Left ventricle myocardium inferior (tissue), 1 donor: ENCODE measurements at regions of chr3 and their contacts with region 1.

Region 1: DNA sequence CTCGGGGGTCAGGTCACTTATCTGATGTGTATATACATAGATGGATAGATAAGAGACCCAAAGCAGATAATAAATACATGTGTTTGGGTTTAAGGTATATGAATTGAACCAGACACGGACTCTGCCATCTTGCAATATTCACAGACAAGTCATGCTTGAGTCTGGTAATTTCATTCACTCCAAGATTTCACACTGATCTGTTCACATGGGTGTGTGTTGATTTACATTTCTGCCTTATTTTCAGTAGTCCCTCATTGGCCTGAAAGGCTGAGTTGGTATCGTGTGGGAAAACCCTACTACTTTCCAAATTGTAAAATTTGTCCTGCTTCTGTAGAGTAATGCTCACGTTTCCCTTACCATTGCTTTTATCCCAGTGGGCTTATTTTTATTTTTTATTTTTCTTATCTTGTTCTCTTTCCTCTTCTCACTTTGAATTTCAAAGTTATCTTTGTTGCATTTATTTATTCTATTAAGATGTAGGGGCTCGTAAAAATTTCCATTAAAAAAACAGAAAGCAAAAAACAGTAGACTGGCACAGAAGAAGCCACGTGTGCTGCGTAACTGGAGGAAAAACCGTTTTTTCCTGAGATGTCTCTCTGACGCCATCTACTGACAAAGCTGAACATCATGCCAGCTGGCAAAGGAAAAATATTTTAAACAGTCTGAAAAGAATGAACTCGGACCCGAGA is 10.8 kb upstream of the MFSD1 start:
- DNase-seq: no peak
- H3K4me3 ChIP-seq: peak overlapping the region; percentile 39
- H3K27ac ChIP-seq: no peak overlapping the region
- H3K4me1 ChIP-seq: peaks cover 10% of the 10 kb centered on the region
- H3K27me3 ChIP-seq: no peaks in the 10 kb centered on the region
- CTCF ChIP-seq: peak; percentile 89

Region 2: DNA sequence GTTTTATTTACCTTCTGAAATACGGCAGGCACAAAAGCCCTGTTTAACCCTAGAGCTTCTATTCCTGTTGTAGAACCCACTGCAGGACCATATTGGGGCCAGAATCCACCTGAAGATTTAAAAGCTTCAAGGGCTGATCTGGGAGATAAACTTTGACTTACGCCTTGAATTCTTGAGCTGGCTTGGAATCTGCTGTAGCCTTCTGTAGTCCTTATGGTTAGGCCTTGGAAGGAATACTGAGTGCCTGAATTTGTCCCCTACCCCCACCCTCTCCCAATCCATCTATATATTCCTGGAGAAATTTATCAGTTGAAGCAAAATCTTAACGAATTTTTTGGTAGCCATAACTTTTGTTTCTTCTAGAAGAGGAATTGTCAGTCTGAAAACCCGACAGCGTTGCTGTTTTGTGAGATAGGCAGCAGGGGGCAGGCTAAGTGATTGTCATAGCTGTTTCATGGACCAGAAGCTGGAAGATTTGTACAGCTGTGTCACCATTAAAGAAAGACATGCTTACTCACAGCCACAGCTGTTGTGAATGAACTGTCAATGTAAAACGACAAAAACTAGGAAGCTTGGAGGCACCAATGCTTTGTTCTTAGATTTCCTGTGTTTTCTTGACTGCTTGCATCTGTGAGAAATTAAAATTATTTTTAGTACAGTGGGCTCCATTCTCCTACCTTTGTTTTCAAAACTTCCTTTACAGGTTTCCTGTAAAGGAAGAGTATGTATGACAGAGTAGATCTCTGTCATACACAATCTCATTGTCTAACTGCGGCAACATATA is 131.4 kb before region 1 on chr3:
- intact Hi-C with region 1: loop called (anchors 5 kb)
- DNase-seq: peak; percentile 20
- H3K4me3 ChIP-seq: no peak overlapping the region
- H3K27ac ChIP-seq: peak overlapping the region; percentile 43
- H3K4me1 ChIP-seq: peaks cover 13% of the 10 kb centered on the region
- H3K27me3 ChIP-seq: no peaks in the 10 kb centered on the region
- CTCF ChIP-seq: peak; percentile 75

Region 3: DNA sequence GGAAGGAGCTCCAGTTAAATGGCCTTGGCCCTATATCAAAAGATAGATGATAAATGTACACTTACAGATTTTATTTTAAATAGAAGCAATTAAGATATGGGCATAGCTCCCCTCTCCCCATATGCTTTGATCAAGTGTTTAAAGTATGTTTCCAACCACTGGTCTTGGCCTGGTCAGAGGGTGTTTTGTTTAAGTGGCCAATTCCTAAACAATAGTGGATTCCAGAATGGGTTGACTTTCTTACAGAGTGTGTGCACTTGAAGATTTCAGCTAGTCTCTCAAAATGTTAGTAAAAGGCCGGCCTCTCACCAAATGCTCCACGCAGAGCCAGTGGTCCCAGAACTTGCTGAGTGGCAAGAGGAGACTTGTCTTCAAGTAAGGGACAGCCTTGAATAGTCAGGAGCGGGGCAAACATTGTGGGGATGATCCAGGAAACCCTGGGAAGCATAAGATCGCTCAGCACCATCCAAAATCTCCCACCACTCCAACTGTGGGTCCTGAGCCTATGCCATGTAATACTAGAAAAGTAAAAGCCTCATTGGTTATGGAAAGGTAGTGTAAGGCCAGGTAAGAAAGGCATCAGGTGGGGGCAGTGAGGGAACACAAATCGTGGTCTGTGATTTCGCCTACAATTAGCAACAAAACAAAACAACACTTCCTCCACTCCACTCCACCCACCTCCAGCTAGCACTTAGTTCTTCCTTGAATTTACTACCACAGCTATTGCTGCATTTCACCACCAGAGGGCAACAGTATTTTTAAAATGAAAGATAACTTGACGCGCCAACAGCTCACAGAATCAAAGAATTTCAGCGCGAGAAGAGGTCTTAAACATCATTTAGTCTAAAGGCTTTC is 63.6 kb before region 1 on chr3:
- intact Hi-C with region 1: loop called (anchors 5 kb)
- DNase-seq: no peak
- H3K4me3 ChIP-seq: peak overlapping the region; percentile 11
- H3K27ac ChIP-seq: peak overlapping the region; percentile 41
- H3K4me1 ChIP-seq: peaks cover 57% of the 10 kb centered on the region
- H3K27me3 ChIP-seq: no peaks in the 10 kb centered on the region
- CTCF ChIP-seq: peak; percentile 89